Activated T-helper 2 cell treated with anti-CD3 and anti-CD28 coated beads, Interferon-gamma antibody, Interleukin-2, Interleukin-4, amounts not matched to agents 10 μg/mL and 5 μg/mL and 100 μg/mL, durations not matched to agents 14 hours and 24 hours and 36 hours (primary cell): ENCODE measurements at regions of chr20 and their contacts with region 1.

Region 1: DNA sequence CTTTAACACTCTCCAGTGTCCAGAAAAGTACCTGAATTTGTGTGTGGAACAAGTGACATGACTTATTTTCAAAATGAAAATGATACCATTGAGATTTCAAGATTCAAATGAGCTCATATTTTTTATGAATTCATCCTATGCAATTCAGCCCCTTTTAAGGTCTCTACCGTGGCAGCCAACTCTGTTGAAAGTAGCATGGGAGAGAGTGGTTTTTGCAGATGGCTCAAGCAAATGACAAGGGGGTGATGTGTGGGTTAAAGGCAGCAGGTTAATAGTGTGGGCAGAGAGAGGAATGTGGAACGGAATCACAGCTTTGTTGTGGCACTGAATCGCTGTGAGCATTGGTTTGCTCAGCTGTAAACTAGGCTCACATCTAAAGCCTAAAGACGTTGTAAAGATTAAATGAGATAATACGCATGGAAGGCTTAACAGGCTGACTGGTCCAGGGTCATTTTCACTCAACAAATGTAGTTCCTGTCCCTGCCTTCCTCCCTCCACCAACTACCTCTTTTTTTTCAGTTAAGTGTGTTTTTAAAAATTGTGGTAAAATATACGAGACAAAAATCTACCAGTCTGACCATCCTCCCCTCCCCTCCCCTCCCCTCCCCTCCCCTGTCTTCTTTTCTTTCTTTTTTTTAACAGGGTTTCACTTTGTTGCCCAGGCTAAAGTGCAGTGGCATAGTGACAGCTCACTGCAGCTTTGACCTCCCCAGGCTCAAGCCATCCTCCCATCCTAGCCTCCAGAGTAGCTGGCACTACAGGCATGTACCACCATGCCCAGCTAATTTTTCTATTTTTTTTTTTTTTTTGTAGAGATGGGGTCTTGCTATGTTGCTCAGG is 114.7 kb upstream of the ZNF217 start:
- DNase-seq: peak; percentile 42
- H3K4me3 Mint-ChIP-seq: peak overlapping the region; percentile 64
- H3K27ac Mint-ChIP-seq: peak overlapping the region; percentile 97
- H3K4me1 Mint-ChIP-seq: peaks cover 45% of the 10 kb centered on the region
- H3K27me3 Mint-ChIP-seq: no peaks in the 10 kb centered on the region

Region 2: GRCh38 chr20:53444401-53445149 is 263.8 kb before region 1 on chr20:
- intact Hi-C with region 1: no loop called
- DNase-seq: no peak
- H3K4me3 Mint-ChIP-seq: no peak overlapping the region
- H3K27ac Mint-ChIP-seq: no peak overlapping the region
- H3K4me1 Mint-ChIP-seq: peaks cover 3% of the 10 kb centered on the region
- H3K27me3 Mint-ChIP-seq: no peaks in the 10 kb centered on the region

Region 3: DNA sequence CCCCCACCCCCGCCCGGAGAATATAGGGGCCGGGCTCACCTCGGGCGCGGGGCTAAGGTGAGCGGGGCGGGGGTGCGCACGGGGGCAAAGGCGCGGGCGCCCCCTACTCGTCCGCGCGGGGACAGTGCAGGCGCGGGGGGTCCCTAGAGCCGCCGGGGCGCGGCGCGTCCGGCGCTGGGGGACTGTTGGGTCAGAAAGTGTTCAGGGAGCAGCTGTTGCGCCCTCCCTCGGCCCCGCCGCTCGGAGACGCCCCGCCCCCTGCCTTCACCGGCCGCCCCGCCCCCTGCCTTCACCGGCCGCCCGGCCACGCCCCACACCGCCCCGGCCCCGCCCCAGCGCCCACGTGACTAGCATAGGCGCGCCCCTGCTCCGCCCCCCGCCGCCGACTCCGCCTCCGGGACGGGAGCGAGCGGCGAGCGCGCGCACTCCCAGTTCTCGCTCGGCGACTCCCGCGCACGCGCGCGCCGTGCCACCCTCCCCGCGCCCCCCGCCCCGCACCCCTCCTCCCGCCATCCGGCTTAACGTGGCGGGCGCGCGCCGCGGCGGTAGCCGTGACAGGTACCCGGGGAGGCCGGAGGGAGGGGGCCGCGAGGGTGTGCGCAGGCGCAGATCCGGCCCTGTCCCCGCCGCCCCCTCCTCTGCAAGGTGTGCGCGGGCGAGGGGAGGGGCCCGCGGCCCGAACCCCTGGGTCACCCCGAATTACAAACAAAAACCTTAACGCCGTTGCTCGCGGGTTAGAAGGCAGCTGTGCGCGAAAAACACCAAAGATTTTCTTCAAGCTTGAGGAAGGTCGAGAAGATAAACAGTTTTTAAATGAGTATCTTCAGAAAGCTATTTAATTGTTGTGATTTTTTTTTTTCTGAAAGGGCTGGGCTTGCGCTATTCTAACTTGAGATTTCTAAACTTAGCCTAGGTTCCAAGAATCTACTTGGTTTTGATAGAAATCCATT is 114.0 kb before region 1 on chr20:
- intact Hi-C with region 1: loop called (anchors 5 kb)
- DNase-seq: peak; percentile 92
- H3K4me3 Mint-ChIP-seq: peak overlapping the region; percentile 85
- H3K27ac Mint-ChIP-seq: peak overlapping the region; percentile 92
- H3K4me1 Mint-ChIP-seq: peaks cover 49% of the 10 kb centered on the region
- H3K27me3 Mint-ChIP-seq: no peaks in the 10 kb centered on the region

Region 4: GRCh38 chr20:53660078-53660909 is 48.1 kb before region 1 on chr20:
- intact Hi-C with region 1: loop called (anchors 1 kb)
- DNase-seq: no peak
- H3K4me3 Mint-ChIP-seq: peak overlapping the region; percentile 77
- H3K27ac Mint-ChIP-seq: peak overlapping the region; percentile 84
- H3K4me1 Mint-ChIP-seq: peaks cover 55% of the 10 kb centered on the region
- H3K27me3 Mint-ChIP-seq: no peaks in the 10 kb centered on the region

Region 5: GRCh38 chr20:53739799-53740785 is 31.7 kb after region 1 on chr20:
- intact Hi-C with region 1: loop called (anchors 1 kb)
- DNase-seq: no peak
- H3K4me3 Mint-ChIP-seq: peak overlapping the region; percentile 82
- H3K27ac Mint-ChIP-seq: peak overlapping the region; percentile 96
- H3K4me1 Mint-ChIP-seq: peaks cover 44% of the 10 kb centered on the region
- H3K27me3 Mint-ChIP-seq: no peaks in the 10 kb centered on the region

Region 6: DNA sequence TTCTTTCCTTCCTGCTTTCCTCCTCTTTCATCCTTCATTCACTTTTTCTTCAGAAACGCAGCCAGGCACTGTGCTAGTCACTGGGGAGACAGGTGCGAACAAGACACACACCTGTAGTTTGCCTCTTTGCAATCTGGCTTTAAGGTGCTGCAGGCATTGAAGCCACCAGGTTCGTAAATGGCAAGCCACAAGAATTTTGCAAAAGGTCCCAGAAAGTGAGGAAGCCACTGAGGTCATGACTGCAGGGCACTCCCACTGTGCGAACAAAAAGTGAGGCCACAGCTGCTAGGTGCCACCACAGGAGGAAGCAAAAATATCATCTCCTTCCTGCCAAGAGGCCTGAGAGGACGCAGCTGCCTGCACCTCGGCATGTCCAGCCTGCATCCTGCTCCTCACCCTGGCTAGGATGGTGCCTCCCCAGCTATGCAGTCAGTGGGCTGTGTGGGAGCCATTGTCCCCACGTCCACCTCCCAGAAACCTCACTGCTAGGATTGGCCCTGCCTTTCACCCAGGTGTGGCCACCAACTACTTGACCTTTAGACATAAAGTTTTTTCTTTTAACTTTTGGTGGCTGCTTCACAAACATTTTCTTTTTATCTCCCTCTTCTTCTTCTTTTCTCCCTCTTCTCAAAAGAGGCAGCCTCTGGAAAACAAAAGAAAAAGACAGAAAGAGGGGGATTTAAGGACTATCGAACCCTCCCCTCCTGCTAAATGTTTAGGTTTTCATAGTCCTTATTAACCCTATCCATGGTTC is 131.3 kb after region 1 on chr20:
- intact Hi-C with region 1: loop called (anchors 1 kb)
- DNase-seq: peak; percentile 64
- H3K4me3 Mint-ChIP-seq: peak overlapping the region; percentile 73
- H3K27ac Mint-ChIP-seq: peak overlapping the region; percentile 84
- H3K4me1 Mint-ChIP-seq: peaks cover 62% of the 10 kb centered on the region
- H3K27me3 Mint-ChIP-seq: no peaks in the 10 kb centered on the region

Region 7: GRCh38 chr20:53949319-53949889 is 241.1 kb after region 1 on chr20:
- intact Hi-C with region 1: loop called (anchors 2 kb)
- DNase-seq: peak; percentile 79
- H3K4me3 Mint-ChIP-seq: peak overlapping the region; percentile 49
- H3K27ac Mint-ChIP-seq: peak overlapping the region; percentile 90
- H3K4me1 Mint-ChIP-seq: peaks cover 31% of the 10 kb centered on the region
- H3K27me3 Mint-ChIP-seq: no peaks in the 10 kb centered on the region